RWPE1 (cell line): ENCODE measurements at regions of chr19 and their contacts with region 1.

Region 1: GRCh38 chr19:10000171-10000826 is 10.0 kb downstream of the COL5A3 start:
- DNase-seq: peak; percentile 67
- H3K27ac ChIP-seq: no peak overlapping the region
- CTCF ChIP-seq: peak; percentile 89

Region 2: DNA sequence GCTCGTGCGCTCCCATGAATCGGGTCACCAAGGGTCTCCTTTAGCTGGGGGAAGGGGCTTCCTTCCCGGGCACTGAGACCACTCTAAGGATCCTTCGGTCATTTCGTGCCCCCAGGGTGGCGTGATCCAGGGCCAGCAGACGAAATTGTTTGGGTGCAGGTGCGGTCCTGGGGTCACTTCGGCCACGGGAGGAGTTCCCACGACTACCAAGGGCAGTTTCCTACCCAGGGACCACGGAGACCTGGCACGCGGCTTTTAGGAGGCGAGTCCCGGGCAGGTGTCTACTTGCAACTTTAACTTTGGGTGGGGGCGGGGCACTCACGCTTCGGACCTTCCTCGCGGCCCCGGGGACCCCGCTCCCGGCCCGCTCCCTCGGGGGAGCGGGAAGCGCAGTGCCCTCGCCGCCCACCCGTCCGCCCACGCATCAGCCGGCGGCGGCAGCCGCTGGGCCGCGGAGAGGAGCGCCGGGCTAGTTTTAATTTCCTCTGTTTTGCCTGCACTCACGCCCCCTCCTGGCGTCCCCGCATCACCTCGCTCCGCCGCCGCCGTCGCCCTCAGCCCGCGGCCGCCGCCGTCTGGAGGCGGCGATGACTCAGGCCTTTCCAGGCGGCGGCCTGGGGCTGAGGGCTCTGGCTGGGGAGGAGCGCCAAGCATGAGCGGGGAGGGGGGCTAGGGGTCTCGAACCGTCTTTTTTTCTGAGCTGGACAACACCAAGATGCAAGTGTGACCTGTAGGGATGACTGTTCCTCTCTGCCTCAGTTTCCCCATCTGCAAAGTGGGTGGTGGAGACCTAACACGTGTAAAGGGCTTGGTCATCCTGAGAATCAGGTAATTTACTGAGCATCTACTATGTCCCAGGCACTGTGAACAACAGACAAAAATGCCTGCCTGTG is 85.7 kb before region 1 on chr19:
- CTCF ChIA-PET with region 1: no interaction called
- POLR2A ChIA-PET with region 1: no interaction called
- DNase-seq: peak; percentile 92
- H3K27ac ChIP-seq: peak overlapping the region; percentile 21
- CTCF ChIP-seq: peak; percentile 76

Region 3: GRCh38 chr19:9932835-9933234 is 67.5 kb before region 1 on chr19:
- CTCF ChIA-PET with region 1: interaction called, 15 read pairs
- POLR2A ChIA-PET with region 1: no interaction called
- DNase-seq: no peak
- H3K27ac ChIP-seq: no peak overlapping the region
- CTCF ChIP-seq: no peak

Region 4: GRCh38 chr19:9971166-9971897 is 29.0 kb before region 1 on chr19:
- CTCF ChIA-PET with region 1: no interaction called
- POLR2A ChIA-PET with region 1: no interaction called
- DNase-seq: no peak
- H3K27ac ChIP-seq: no peak overlapping the region
- CTCF ChIP-seq: no peak

Region 5: GRCh38 chr19:9981406-9982260 is 18.7 kb before region 1 on chr19:
- CTCF ChIA-PET with region 1: interaction called, 38 read pairs
- POLR2A ChIA-PET with region 1: interaction called, 11 read pairs
- DNase-seq: no peak
- H3K27ac ChIP-seq: no peak overlapping the region
- CTCF ChIP-seq: no peak

Region 6: GRCh38 chr19:9986787-9987281 is 13.5 kb before region 1 on chr19:
- CTCF ChIA-PET with region 1: interaction called, 38 read pairs
- POLR2A ChIA-PET with region 1: interaction called, 11 read pairs
- DNase-seq: no peak
- H3K27ac ChIP-seq: no peak overlapping the region
- CTCF ChIP-seq: no peak

Region 7: DNA sequence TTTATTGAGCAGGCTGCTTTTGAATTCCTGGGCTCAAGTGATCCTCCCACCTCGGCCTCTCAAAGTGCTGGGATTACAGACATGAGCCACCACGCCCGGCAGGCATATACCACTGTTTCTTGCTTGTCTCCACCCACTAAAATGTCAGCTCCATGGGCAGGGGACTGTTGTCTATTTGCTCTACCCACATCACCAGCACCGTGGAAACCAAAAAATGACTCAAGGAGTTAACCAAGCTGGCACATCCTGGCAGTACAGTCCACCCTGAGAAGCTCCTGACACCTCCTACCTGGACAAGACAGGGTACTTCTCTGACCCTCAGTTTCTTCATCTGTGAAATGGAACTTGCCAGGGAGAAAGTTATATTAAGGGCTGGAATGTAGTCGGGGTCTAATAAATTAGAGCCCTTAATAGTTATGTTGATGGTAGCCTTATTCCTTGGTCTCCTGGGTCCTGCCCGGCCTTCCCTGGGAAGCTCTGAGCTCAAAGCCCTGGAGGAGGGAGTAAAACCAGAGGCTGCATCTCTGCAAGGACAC is 26.9 kb after region 1 on chr19:
- CTCF ChIA-PET with region 1: interaction called, 16 read pairs
- POLR2A ChIA-PET with region 1: no interaction called
- DNase-seq: peak; percentile 30
- H3K27ac ChIP-seq: peak overlapping the region; percentile 70
- CTCF ChIP-seq: no peak